Tibial artery (tissue), 4 donors: ENCODE measurements at regions of chr11 and their contacts with region 1.

Region 1: DNA sequence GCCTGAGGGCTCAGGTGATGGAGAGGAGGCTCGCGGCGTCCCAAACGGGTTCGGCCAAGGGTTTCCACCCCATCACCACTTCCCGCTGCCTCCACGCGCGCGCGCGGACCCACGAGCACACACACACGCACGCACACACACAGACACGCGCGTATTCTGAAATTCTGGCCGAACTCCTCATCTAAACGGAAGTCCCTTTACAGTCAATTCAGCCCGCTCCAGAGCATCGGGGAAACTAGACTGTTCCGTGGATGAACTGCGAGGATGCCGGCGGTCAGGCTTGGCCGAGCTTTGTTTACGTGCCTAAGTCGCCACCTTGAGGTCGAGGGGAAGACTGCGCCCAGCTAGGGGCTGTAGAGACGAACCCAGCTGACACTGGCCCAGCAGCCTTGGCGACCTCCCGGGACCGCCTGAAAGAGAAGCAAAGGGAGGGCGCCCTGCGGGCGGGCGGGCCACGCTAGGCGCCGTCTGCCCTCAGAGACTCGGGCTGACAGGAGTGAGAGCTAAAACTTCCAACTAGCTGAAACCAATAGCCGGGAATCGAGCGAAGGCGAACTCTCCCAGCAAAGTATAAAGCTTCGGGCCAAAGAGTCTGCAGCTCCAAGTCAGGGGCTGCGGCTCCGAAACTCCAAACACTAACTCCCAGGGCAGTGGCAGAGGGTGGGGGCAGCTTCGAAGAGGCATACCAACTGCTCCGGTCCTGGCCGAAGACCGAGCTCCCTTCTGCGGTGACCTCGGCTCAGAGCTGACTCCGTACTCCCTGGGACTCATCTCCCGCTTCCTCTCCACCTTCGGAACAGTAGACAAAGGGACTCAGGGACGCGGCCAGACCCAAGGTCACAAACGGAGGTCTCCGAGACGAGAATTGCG is 124.7 kb upstream of the C11orf58 start:
- DNase-seq: peak; percentile 88 to 93
- H3K4me3 ChIP-seq: peak overlapping the region; percentile 59 to 78
- H3K27ac ChIP-seq: peak overlapping the region; percentile 75 to 78
- H3K4me1 ChIP-seq: peaks cover 0 to 14% (median 9%) of the 10 kb centered on the region in 4 donors
- H3K27me3 ChIP-seq: peaks cover 0 to 3% of the 10 kb centered on the region in 2 donors
- CTCF ChIP-seq: peak; percentile 86 to 93

Region 2: GRCh38 chr11:15113381-15113780 is 1500.4 kb before region 1 on chr11:
- intact Hi-C with region 1: loop called (anchors 10 kb)
- DNase-seq: no peak
- H3K4me3 ChIP-seq: no peak overlapping the region
- H3K27ac ChIP-seq: no peak overlapping the region
- H3K4me1 ChIP-seq: peaks cover 0 to 14% (median 13%) of the 10 kb centered on the region in 4 donors
- H3K27me3 ChIP-seq: peaks cover 0 to 4% of the 10 kb centered on the region in 2 donors
- CTCF ChIP-seq: no peak

Region 3: DNA sequence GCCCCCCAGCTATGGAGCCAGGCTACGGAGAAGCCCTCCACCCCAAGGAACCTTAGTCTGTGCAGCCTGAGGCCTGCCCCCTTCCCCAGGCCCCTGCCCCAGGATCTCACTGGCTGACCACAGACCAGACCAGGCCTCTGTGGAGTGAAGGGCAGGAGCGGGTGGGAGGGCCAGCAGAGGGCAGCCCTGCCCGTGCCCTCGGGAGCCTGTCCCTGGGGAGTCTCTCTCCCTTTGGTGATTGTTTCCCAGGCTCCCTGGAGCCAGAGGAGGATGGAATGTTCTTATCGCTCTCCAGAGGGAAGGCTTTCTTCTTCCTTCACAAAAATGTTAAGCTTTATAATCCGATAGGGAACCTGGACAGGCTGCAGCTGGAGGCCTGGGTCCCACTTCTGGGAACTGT is 712.7 kb before region 1 on chr11:
- intact Hi-C with region 1: loop called (anchors 5 kb)
- DNase-seq: no peak
- H3K4me3 ChIP-seq: no peak overlapping the region
- H3K27ac ChIP-seq: peak overlapping the region; percentile 7
- H3K4me1 ChIP-seq: peaks cover 0 to 34% (median 18%) of the 10 kb centered on the region in 4 donors
- H3K27me3 ChIP-seq: no peaks in the 10 kb centered on the region
- CTCF ChIP-seq: peak in 1 of 2 experiments; percentile 44

Region 4: GRCh38 chr11:16474659-16475058 is 139.1 kb before region 1 on chr11:
- intact Hi-C with region 1: no loop called
- DNase-seq: no peak
- H3K4me3 ChIP-seq: no peak overlapping the region
- H3K27ac ChIP-seq: no peak overlapping the region
- H3K4me1 ChIP-seq: peaks cover 0 to 28% (median 4%) of the 10 kb centered on the region in 4 donors
- H3K27me3 ChIP-seq: no peaks in the 10 kb centered on the region
- CTCF ChIP-seq: no peak